Activated CD8-positive, alpha-beta T cell treated with anti-CD3 and anti-CD28 coated beads, Interleukin-2, amount 10 ng/mL, durations not matched to agents 7 days and 5 days (primary cell): ENCODE measurements at regions of chr17 and their contacts with region 1.

Region 1: DNA sequence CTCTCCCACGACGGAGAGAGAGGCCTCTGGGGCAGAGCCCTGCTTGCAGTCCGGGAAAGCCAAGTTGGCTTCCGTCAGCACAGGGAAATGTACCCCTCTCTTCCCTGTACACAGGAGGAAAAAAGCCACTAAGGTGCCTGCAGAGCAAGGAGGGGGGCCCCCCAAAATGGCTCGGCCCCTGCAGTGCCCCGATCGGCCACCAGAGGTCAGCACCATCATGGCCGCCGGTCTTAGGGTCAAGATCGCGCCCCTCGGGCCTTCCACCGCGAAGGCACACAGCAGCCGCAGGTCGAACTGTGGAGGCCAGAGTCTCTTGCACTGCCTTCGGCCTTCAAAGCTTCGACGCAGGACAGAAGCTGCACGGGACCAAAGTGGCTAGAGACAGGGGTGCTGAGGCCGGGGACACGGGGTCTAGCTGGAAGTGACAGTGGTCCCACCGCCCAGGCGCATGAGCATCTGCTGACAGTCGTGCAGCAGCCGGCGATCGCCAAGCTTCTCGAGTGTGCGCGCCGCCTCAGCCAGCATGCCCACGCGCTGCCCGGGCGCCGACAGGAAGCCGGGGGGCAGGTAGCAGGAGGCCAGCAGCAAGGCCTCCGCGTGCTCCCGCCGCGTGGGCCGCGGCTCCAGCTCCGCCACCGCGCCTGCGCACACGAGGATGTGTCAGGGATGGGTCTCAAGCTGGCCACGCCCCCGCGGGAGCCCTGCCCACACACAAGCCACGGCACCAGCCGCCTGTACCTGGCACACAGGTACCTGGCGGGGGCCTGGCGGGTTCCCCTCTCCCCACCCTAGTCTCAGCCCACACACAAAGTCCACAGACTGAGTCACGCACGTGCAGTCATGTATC is 24.4 kb downstream of the SREBF1 start:
- DNase-seq: peak; percentile 66
- ATAC-seq: peak; percentile 44
- H3K4me3 Mint-ChIP-seq: no peak overlapping the region
- H3K27ac Mint-ChIP-seq: no peak overlapping the region
- H3K4me1 Mint-ChIP-seq: peaks cover 34% of the 10 kb centered on the region
- H3K27me3 Mint-ChIP-seq: no peaks in the 10 kb centered on the region

Region 2: DNA sequence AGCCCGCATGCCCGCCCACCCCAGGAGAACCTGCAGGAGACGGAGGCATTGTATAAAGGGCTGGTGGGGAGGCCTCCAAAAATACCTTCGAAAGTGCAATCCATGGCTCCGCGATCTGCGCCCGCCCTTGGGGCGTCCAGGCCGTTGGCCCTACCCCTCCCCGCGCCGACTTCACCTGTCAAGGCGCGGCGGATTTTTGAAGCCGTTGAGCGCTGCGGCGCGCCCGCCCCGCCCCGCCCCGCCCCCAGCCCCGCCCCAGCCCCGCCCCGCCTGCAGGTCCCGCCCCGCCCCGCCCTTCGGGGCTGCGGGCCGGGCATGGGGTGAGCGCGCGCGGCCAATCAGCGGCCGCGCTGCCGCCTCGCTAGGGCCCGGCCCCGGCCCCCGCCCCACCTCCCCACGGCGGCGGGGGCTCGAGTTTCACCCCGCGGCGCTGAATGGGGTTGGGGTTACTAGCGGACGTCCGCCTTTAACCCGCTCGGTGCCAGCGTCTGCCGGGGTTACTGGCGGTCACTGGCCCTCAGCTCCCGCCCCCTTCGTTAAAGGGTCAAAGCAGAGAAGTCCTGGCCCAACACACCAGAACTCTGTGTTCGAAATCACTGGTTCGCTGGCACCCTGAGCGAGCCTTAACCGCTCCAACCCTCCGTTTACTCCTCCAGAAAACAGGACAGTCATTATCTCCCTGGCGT is 11.1 kb after region 1 on chr17:
- CTCF ChIA-PET with region 1: interaction called, 24 read pairs
- POLR2A ChIA-PET with region 1: interaction called, 5 read pairs
- DNase-seq: peak; percentile 90
- ATAC-seq: peak; percentile 84
- H3K4me3 Mint-ChIP-seq: peak overlapping the region; percentile 83
- H3K27ac Mint-ChIP-seq: peak overlapping the region; percentile 91
- H3K4me1 Mint-ChIP-seq: peaks cover 92% of the 10 kb centered on the region
- H3K27me3 Mint-ChIP-seq: no peaks in the 10 kb centered on the region

Region 3: DNA sequence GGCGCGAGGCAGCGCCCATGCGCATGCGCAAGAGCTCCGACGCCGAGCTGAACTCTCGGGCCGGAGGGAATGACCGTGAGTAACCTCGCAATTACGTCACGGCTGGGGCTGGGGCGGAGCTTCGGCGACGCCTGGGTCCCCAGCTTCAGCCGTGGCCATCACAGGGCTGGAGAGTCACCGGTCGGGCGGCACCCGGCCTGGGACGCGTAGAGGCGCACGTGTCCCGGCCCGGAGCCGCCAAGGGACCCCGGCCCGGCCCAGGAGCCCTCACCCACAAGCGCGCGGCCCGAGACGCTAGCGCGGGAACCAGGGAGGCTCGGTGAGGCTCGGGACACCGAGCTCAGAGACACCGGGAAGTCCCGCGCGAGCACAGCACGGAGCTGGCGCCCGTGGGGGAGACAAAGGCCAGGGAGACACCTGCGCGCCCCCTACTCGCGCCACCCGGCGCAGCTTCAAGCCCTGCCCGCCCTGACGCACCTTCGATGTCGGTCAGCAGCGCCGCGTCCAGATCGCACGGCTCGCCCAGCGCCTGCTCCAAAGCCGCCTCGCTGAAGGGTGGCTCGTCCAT is 23.9 kb after region 1 on chr17:
- CTCF ChIA-PET with region 1: interaction called, 10 read pairs
- POLR2A ChIA-PET with region 1: interaction called, 24 read pairs
- DNase-seq: peak; percentile 98
- ATAC-seq: peak; percentile 73
- H3K4me3 Mint-ChIP-seq: peak overlapping the region; percentile 96
- H3K27ac Mint-ChIP-seq: peak overlapping the region; percentile 93
- H3K4me1 Mint-ChIP-seq: peaks cover 76% of the 10 kb centered on the region
- H3K27me3 Mint-ChIP-seq: no peaks in the 10 kb centered on the region

Region 4: DNA sequence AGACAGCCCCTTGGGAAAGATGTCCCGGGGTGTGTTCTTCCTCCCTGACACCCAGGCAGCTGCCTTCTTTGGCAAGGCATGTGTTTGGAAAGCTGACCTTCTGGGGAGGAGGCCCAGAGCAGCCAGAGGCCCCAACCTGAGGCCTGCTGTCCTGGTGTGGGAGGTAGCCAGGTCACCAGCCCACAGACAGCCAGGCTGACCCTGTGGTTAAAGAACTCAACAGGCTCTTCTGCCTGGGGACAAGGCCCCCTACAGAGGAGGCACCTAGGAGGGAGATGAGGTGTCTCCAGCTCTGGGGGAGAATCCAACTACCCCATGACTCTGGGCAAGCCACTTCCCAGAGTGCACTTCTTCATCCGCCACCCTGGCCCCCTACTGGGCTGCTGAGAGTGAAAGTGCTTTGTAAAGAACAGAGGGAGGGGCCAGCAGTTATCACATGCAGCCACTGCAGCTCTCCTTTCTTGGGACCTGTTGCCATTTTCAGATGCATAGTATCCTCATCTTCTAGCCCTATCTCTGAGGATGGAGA is 37.5 kb after region 1 on chr17:
- CTCF ChIA-PET with region 1: interaction called, 27 read pairs
- POLR2A ChIA-PET with region 1: interaction called, 35 read pairs
- DNase-seq: peak; percentile 91
- ATAC-seq: peak; percentile 66
- H3K4me3 Mint-ChIP-seq: peak overlapping the region; percentile 50
- H3K27ac Mint-ChIP-seq: peak overlapping the region; percentile 92
- H3K4me1 Mint-ChIP-seq: peaks cover 84% of the 10 kb centered on the region
- H3K27me3 Mint-ChIP-seq: no peaks in the 10 kb centered on the region

Region 5: GRCh38 chr17:17911001-17911613 is 98.7 kb after region 1 on chr17:
- CTCF ChIA-PET with region 1: no interaction called
- POLR2A ChIA-PET with region 1: no interaction called
- DNase-seq: no peak
- ATAC-seq: no peak
- H3K4me3 Mint-ChIP-seq: no peak overlapping the region
- H3K27ac Mint-ChIP-seq: peak overlapping the region; percentile 42
- H3K4me1 Mint-ChIP-seq: peaks cover 12% of the 10 kb centered on the region
- H3K27me3 Mint-ChIP-seq: no peaks in the 10 kb centered on the region